Vagina (tissue), 2 donors: ENCODE measurements at regions of chr5 and their contacts with region 1.

Region 1: DNA sequence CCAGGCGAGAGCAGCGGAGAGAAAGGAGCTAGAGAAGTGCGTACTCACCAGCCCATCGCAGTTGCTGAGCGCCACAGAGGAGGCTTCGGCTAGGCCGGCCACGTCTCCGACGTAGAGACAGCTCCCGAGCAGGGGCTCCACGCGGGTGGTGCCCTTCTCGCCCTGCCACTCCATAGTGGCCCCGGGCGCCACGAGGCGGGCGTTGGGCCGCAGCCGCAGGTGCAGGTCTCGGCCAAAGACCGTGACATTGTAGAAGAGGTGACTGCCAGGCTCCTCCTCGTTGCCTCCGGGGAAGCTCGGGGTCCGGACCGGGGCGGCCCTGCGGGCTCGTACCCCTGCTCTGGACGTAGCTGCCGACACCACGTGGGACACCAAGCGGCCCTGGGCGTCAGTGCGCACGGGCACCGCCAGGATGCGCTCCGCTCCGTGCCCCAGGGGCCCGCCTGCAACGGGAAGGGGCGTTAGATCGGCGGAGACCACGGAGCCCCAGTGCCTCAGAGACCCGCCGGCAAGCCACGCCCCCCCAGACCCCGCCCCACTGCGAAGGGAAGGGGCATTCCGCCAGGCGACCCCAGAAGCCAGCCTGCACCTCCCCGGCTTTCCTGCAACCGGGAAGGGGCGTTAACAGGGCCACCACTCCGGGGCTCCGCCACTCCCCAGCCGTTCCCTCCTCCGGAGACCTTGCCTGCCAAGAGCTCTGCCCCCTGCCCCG is 1.4 kb downstream of the ADAMTS2 start:
- DNase-seq: no peak
- H3K4me3 ChIP-seq: peak overlapping the region; percentile 55 to 69
- H3K27ac ChIP-seq: peak overlapping the region; percentile 80
- H3K4me1 ChIP-seq: peaks cover 27% of the 10 kb centered on the region
- H3K27me3 ChIP-seq: no peaks in the 10 kb centered on the region
- CTCF ChIP-seq: peak; percentile 4 to 39 (median 27)
- POLR2A ChIP-seq: no peak

Region 2: GRCh38 chr5:179166886-179167841 is 176.7 kb before region 1 on chr5:
- intact Hi-C with region 1: loop called (anchors 5 kb)
- DNase-seq: no peak
- H3K4me3 ChIP-seq: peak overlapping the region in 1 of 2 donors; percentile 30
- H3K27ac ChIP-seq: peak overlapping the region; percentile 57
- H3K4me1 ChIP-seq: peaks cover 13% of the 10 kb centered on the region
- H3K27me3 ChIP-seq: no peaks in the 10 kb centered on the region
- CTCF ChIP-seq: peak; percentile 63 to 100 (median 85)
- POLR2A ChIP-seq: no peak

Region 3: GRCh38 chr5:179270631-179271591 is 73.0 kb before region 1 on chr5:
- intact Hi-C with region 1: loop called (anchors 5 kb)
- DNase-seq: peak in 1 of 2 donors; percentile 88
- H3K4me3 ChIP-seq: no peak overlapping the region
- H3K27ac ChIP-seq: peak overlapping the region; percentile 87
- H3K4me1 ChIP-seq: peaks cover 94% of the 10 kb centered on the region
- H3K27me3 ChIP-seq: no peaks in the 10 kb centered on the region
- CTCF ChIP-seq: no peak
- POLR2A ChIP-seq: no peak

Region 4: DNA sequence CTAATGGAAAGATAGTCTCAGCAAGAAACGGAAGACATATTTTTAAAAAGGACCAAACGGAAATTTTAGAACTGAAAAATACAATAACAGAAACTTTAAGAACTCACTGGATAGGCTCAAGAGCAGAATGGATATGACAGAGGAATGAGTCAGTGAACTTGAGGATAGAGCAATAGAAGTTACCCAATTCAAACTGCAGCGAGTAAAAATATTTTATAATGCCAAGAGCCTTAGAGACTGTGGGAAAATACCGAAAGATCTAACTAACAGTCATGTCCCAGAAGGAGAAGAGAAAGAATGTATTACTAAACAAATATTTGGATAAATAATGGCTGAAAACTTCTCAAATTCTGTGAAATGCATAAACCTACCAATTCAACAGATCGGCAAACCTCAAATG is 39.4 kb before region 1 on chr5:
- intact Hi-C with region 1: no loop called
- DNase-seq: no peak
- H3K4me3 ChIP-seq: no peak overlapping the region
- H3K27ac ChIP-seq: peak overlapping the region; percentile 72
- H3K4me1 ChIP-seq: peaks cover 43% of the 10 kb centered on the region
- H3K27me3 ChIP-seq: no peaks in the 10 kb centered on the region
- CTCF ChIP-seq: no peak
- POLR2A ChIP-seq: no peak

Region 5: DNA sequence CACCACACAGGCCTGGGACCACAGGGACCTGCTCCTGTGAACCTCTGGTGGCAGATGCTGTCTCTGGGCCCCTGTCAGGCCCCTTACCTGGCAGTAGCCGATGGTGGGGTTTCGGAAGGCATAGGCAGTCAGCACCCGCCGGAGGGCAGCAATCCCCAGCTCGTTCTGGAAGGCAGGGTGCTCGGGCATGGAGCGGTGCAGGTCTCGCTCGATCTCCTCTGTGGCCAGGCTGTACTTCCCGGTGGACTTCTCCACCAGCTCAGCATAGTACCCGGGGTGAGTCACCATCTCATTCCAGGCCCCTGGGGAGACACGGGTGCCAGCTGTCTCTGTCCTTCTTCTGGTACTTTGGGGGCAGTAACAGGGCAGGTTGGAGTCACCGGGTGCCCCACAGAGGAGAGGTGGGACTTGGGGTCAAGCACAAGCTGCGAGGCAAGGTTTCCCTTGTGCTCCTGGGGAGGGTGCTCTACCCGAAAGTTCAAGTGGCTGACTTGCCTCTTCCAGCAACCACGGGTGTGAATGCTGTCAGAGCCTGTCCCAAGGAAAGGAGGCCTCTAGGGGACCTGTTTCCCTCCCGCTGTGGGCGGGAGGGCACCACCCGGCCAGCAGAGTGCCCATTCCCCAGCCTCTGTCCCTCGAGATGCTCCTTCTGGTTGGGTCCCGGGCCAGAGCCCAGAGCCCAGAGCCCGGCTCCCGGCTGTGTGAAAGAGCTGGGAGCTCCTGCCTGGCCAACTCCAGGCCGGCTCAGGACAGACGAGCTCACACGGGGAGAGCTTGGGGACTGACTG is 534.5 kb after region 1 on chr5:
- intact Hi-C with region 1: no loop called
- DNase-seq: no peak
- H3K4me3 ChIP-seq: no peak overlapping the region
- H3K27ac ChIP-seq: no peak overlapping the region
- H3K4me1 ChIP-seq: peaks cover 8% of the 10 kb centered on the region
- H3K27me3 ChIP-seq: no peaks in the 10 kb centered on the region
- CTCF ChIP-seq: no peak
- POLR2A ChIP-seq: no peak